Ascending aorta (tissue), 2 donors: ENCODE measurements at regions of chr16 and their contacts with region 1.

Region 1: DNA sequence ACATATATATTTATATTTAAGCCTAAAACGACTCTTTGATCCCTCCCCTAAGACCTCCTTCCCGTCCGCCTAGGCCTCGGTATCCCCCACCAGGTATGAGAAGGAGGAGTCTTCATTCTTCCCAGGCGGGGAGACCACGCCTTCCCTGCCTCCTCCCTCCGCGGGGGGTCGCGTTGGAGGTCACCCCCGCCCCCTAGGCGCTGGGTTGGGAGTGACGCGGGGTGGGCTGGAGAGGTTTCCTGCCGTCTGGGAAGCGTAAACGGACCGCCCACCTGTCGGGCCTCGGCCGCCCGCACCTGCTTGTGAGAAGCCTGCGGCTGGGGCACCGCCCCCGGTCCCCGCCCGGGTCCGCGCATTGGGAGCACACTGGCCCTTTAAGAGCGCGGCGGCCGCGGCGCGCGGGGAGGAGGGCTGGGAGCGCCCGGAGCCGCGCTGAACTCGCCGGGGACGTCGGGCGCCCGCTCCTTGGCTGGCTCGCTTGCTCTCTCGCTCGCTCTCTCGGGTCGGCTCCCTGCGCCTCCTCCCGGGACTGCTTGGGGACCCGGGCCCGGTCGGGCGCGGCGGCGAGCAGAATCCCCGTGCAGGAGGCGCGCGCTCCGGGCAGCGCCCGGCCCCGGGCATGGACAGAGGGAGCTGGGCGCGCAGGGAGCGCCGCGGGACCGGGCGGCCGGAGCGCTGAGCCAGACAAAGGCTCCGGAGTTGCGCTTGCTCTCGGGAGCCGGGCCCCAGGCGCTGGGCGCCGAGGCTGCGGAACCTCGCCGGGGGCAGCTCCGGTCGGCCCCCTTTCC is at the start of gene MMP15:
- DNase-seq: peak in 1 of 2 donors; percentile 78
- H3K4me3 ChIP-seq: peak within 1 kb of the TSS; percentile 74 to 82
- H3K27ac ChIP-seq: peak within 1 kb of the TSS; percentile 73 to 74
- H3K4me1 ChIP-seq: peaks cover 7 to 18% of the 10 kb centered on the region in 2 donors
- H3K27me3 ChIP-seq: no peaks in the 10 kb centered on the region
- CTCF ChIP-seq: no peak
- total RNA-seq, gene MMP15: 14.9 TPM

Region 2: DNA sequence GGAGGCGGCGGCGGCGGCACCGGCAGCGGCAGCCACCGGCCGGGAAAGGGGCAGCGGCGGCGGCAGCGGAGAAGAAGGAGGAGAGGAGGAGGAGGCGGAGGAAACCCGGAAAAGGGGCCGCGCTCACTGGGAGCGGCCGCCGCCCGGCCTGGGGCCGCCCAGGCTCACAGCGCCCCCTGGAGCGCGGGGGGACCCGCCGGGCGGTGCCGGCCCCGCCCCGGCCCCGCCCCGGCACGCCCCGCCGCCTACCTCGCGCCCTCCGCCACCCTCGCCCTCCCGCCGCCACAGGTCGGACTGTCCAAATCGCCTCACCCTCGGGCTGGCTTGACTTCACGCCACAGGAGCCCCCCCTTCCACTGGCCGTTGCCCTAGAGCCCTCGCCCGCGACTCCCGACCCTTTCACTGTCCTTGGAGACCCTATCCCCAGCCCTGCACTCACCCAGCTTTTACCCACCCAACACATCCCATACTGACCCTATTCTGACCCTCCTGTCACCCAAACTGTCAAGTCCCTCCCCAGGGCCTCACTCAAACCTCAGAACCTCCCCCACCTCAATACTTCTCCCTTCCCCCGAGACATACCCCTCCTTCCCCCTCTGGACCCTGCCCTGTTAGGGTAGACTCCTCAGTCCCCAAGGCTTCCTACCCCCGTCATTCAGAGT is 172.6 kb after region 1 on chr16 and contains the start of gene CSNK2A2:
- intact Hi-C with region 1: loop called (anchors 2 kb)
- DNase-seq: peak in 1 of 2 donors; percentile 73
- H3K4me3 ChIP-seq: peak within 1 kb of the TSS; percentile 61 to 93
- H3K27ac ChIP-seq: peak within 1 kb of the TSS in 1 of 2 donors; percentile 15
- H3K4me1 ChIP-seq: peaks cover 6% of the 10 kb centered on the region in 2 donors
- H3K27me3 ChIP-seq: no peaks in the 10 kb centered on the region
- CTCF ChIP-seq: peak in 2 of 3 experiments; percentile 5 to 36
- total RNA-seq, gene CSNK2A2: 14.5 TPM

Region 3: DNA sequence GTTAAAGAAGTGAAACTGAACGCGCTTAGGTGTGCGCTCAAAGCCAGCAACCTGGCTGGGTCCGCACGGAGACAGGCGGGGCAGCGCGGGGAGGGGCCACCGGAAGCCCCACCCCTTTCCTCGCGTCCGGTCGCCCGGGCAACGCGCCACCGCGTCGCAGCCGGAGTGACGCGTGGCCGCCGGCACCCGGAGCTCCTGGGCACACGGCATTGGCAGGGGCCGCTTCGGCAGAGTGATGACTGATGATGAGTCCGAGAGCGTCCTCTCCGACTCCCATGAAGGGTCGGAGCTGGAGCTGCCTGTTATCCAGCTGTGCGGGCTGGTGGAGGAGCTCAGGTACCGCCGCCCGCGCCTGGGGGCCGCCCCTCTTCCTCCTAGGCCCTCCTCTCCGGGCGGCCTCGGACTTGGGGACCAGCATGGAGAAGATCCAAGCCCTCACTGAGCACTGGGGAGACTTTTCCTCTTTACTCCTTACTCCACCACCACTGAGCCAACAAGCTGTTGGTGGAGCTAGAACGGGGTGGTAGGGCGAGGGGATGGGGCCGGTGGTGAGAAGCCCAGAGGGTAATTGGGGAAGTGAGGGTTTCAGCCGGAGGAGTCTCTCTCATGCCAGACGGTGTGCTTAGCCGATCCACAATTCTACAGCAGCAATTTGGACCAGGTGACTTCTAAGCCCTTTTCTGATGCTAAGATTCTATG is 224.4 kb after region 1 on chr16:
- intact Hi-C with region 1: loop called (anchors 10 kb)
- DNase-seq: peak; percentile 16 to 86
- H3K4me3 ChIP-seq: peak overlapping the region; percentile 77 to 78
- H3K27ac ChIP-seq: peak overlapping the region; percentile 52 to 73
- H3K4me1 ChIP-seq: peaks cover 3 to 9% of the 10 kb centered on the region in 2 donors
- H3K27me3 ChIP-seq: no peaks in the 10 kb centered on the region
- CTCF ChIP-seq: no peak

Region 4: DNA sequence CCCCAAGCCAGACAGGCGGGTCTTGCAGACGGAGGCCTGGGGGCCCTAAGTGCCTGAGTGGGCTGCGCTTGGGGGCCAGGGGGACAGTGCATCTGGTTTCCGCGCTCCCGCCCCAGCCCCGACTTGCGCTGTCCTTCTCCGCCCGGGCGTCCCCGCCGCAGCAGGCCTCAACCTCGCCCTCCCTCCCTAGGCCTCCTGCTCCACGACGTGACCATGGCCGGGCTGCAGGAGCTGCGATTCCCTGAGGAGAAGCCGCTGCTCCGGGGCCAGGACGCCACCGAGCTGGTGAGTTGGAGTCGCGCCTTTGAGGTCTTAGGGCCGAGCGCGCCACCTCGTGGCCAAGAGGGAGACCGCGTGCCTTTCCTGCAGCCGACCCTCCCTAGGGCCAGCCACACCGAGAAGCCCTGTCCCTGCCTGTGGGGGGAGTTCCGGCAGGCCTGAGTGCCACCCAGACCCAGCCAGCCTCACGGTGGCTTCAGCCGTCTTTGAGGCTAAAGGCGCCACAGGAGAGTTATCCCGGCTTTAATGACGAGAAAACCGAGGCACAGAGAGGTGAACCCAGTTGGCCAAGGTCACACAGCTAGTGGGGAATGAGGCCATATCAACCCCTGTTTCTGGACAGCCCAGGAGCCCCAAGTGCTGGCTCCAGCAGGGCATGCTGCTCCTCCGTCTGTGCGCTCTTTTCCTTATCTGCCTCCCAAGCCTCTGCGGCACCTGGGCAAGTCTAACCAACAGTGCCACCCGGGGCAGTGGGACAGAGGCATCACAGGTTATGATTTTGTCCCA is 462.2 kb after region 1 on chr16:
- intact Hi-C with region 1: loop called (anchors 10 kb)
- DNase-seq: peak in 1 of 2 donors; percentile 83
- H3K4me3 ChIP-seq: peak overlapping the region; percentile 28 to 39
- H3K27ac ChIP-seq: no peak overlapping the region
- H3K4me1 ChIP-seq: no peaks in the 10 kb centered on the region
- H3K27me3 ChIP-seq: no peaks in the 10 kb centered on the region
- CTCF ChIP-seq: peak; percentile 83 to 93 (median 89)